PC-9 (cell line): ENCODE measurements at regions of chr1 and their contacts with region 1.

Region 1: GRCh38 chr1:111619635-111620440 is at the start of gene RAP1A:
- DNase-seq: peak; percentile 81 to 92
- H3K4me3 ChIP-seq: peak within 1 kb of the TSS; percentile 69
- H3K27ac ChIP-seq: peak within 1 kb of the TSS; percentile 19; the same call in 1 of the 2 replicates
- H3K4me1 ChIP-seq: peaks cover 31% of the 10 kb centered on the region
- H3K27me3 ChIP-seq: no peaks in the 10 kb centered on the region
- CTCF ChIP-seq: no peak
- total RNA-seq, gene RAP1A: 45.4 and 55.2 TPM in 2 replicates

Region 2: GRCh38 chr1:111541721-111542120 is 78.1 kb before region 1 on chr1:
- CTCF ChIA-PET with region 1: no interaction called
- POLR2A ChIA-PET with region 1: interaction called, 3 read pairs
- intact Hi-C with region 1: loop called (anchors 5 kb)
- DNase-seq: peak; percentile 9 to 88
- H3K4me3 ChIP-seq: 0 out of 2 replicates have a peak overlapping the region, but pooled peaks have one; percentile 8
- H3K27ac ChIP-seq: peak overlapping the region; percentile 19; the same call in 1 of the 2 replicates
- H3K4me1 ChIP-seq: peaks cover 29% of the 10 kb centered on the region
- H3K27me3 ChIP-seq: no peaks in the 10 kb centered on the region
- CTCF ChIP-seq: no peak

Region 3: GRCh38 chr1:111571987-111572386 is 47.9 kb before region 1 on chr1:
- CTCF ChIA-PET with region 1: interaction called, 11 read pairs
- POLR2A ChIA-PET with region 1: no interaction called
- intact Hi-C with region 1: no loop called
- DNase-seq: no peak
- H3K4me3 ChIP-seq: no peak overlapping the region
- H3K27ac ChIP-seq: no peak overlapping the region
- H3K4me1 ChIP-seq: no peaks in the 10 kb centered on the region
- H3K27me3 ChIP-seq: no peaks in the 10 kb centered on the region
- CTCF ChIP-seq: no peak

Region 4: GRCh38 chr1:111582016-111582415 is 37.8 kb before region 1 on chr1:
- CTCF ChIA-PET with region 1: no interaction called
- POLR2A ChIA-PET with region 1: no interaction called
- intact Hi-C with region 1: no loop called
- DNase-seq: no peak
- H3K4me3 ChIP-seq: no peak overlapping the region
- H3K27ac ChIP-seq: no peak overlapping the region
- H3K4me1 ChIP-seq: no peaks in the 10 kb centered on the region
- H3K27me3 ChIP-seq: no peaks in the 10 kb centered on the region
- CTCF ChIP-seq: no peak

Region 5: DNA sequence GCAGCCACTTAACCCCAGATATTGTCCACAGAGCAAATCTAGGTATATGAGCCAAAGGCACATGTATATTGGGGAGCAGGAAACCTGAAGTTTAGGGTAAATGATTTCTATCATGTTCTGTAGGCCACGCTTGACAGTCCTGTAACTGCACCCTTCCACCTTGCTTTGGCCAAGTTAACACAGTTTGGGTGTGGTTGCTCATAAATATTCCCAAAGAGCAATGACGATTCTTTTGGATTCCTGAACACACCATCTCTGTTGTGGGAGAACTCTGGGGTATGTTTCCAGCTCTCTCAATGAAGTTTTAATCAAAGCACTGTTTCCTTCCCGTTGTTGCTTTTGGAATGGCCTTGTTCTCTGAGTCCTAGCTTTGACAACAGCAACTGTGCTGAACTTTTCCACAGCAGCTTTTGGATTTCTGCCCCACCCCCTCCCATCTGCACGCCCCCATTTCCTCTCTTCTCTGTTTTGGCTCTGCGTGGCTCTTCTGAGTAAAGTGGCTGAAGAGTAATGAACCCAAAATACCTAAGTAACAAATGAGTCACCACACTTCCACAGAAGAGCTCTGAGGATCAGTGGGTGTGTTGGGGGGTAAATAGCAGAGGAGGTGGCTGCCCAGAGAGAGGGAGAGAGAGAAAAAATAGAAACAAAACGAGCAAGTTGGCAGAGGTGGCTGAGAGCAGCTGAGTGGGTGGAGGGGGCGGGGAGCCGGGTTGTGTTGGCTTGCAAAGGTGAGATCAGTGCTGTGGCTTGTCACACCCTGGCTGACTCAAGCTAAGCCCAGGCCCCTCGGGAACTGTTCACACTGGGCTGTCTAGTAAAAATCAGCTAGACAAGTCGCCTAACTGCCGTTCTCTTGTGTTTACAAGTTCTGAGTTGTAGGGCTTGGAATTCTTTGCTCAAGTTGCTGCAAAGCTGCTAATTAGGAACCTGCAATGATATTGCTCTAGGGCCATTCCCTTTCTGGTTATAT is 27.2 kb before region 1 on chr1:
- CTCF ChIA-PET with region 1: interaction called, 8 read pairs
- POLR2A ChIA-PET with region 1: interaction called, 11 read pairs
- intact Hi-C with region 1: loop called (anchors 2 kb)
- DNase-seq: peak; percentile 87 to 98
- H3K4me3 ChIP-seq: peak overlapping the region; percentile 43
- H3K27ac ChIP-seq: peak overlapping the region; percentile 78
- H3K4me1 ChIP-seq: peaks cover 36% of the 10 kb centered on the region
- H3K27me3 ChIP-seq: no peaks in the 10 kb centered on the region
- CTCF ChIP-seq: no peak